Activated CD8-positive, alpha-beta memory T cell treated with anti-CD3 and anti-CD28 coated beads, Interleukin-2, amount 10 ng/mL, durations not matched to agents 7 days and 5 days (primary cell): ENCODE measurements at regions of chr1 and their contacts with region 1.

Region 1: DNA sequence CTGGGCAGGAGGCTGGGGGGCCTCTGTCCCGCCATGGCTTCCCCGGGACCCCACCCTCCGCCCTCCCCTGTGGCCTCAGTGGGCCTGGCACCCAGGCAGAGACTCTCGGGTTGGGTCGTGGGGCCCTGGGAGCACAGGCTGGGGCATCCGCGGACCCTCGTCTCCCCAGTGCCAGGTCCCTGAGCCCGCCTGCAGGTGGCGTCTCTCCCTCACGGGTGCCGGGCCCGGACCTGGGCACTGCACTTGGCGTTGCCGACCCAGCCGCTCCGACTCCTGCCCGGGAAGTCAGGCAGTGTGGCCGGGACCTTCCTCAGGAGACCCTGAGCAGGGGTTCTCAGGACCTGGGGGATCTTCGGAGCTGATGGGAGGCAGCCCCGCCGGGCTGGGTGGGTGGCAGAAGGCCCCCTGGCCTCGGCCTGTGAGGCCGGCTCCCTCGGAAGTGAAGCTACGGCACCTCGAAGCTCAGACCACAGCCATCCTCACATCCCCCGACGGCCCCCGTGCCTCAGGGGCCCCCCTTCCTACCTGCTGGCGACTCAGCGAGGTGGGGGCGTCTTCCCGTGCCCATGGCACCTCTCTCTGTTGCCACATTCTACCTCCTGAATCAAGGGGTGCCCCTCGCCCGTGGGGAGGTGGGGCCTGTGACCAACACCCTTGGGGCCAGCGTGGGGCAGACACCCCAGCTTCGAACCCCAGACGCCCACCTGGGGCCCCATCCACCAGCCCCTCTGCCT is 6.4 kb upstream of the C1orf159 start:
- DNase-seq: peak; percentile 87
- ATAC-seq: peak; percentile 96
- H3K4me3 Mint-ChIP-seq: no peak overlapping the region
- H3K27ac Mint-ChIP-seq: no peak overlapping the region
- H3K4me1 Mint-ChIP-seq: peaks cover 11% of the 10 kb centered on the region
- H3K27me3 Mint-ChIP-seq: peaks cover 18% of the 10 kb centered on the region

Region 2: GRCh38 chr1:1206376-1207260 is 84.4 kb after region 1 on chr1 and contains the start of gene TNFRSF18:
- CTCF ChIA-PET with region 1: interaction called, 24 read pairs
- DNase-seq: no peak
- ATAC-seq: peak; percentile 17
- H3K4me3 Mint-ChIP-seq: peak within 1 kb of the TSS; percentile 53
- H3K27ac Mint-ChIP-seq: peak within 1 kb of the TSS; percentile 64
- H3K4me1 Mint-ChIP-seq: peaks cover 22% of the 10 kb centered on the region
- H3K27me3 Mint-ChIP-seq: no peaks in the 10 kb centered on the region
- total RNA-seq, gene TNFRSF18: 28.1 to 156 TPM

Region 3: DNA sequence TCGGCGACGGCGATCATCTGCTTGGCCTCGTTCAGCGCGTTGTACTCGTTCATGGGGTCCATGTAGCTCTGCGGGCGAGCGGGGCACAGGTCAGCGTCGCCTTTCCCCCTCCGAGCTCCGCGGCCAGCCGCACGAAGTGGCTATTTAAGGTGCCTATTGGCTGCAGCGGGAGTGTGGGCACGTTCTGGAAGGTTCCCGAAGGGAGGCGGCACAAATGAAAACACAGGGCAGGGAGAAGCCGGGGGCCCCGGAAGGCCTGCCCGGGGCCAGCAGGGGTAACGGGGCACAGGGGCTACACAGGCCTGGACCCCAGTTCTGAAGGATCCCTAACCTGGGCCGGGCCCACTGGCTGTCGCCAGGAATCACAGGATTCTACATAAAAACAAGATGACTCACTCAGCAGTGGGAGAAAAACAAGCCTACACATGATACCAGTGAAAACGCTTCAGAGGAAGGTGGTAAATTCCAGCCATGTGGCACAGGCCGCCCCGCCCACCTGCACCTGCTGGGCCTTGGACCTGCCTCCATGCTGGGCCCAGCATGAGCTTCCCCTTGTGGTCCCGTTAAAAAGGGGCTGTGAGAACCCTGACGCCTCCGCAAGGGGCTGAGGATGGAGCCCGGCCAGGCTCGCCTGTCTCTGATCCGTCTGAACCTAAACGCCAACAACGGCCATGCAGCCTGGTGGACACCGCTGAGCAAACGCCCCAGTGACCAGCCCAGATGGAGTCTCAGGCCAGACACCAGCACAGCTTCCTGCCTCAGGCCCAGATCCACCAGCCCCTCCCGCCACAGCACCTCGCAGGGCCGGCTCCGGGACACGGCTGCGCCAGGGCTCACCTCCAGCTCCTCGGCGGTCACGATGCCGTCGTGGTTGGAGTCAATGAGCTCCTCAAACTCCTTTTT is 95.6 kb after region 1 on chr1:
- CTCF ChIA-PET with region 1: interaction called, 16 read pairs
- DNase-seq: no peak
- ATAC-seq: no peak
- H3K4me3 Mint-ChIP-seq: no peak overlapping the region
- H3K27ac Mint-ChIP-seq: no peak overlapping the region
- H3K4me1 Mint-ChIP-seq: peaks cover 36% of the 10 kb centered on the region
- H3K27me3 Mint-ChIP-seq: no peaks in the 10 kb centered on the region

Region 4: DNA sequence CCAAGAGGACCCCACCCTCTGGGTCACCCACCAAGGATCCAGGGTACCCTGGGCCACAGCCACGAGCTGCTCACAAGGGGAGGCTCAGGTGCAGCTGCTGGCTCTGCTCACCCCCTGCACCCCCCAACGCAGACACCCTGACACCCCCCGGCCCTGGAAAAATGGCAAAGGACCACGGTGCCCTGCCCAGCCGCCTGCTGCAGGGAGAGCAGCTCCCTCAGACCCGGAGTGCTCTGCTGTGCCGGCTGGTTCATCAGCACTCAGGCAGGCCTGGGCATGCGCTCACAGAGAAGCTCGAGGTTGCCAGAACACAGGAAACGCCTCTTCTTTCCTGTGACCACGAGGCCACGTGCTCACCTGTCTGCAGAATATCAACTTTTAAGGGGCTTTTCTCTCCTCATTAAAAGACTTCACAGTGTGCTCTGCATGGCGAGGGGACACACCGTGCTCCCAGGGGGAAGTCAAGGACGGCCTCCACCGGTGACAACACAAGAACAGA is 128.6 kb after region 1 on chr1:
- CTCF ChIA-PET with region 1: interaction called, 46 read pairs
- DNase-seq: peak; percentile 88
- ATAC-seq: peak; percentile 97
- H3K4me3 Mint-ChIP-seq: no peak overlapping the region
- H3K27ac Mint-ChIP-seq: peak overlapping the region; percentile 81
- H3K4me1 Mint-ChIP-seq: peaks cover 14% of the 10 kb centered on the region
- H3K27me3 Mint-ChIP-seq: peaks cover 3% of the 10 kb centered on the region

Region 5: DNA sequence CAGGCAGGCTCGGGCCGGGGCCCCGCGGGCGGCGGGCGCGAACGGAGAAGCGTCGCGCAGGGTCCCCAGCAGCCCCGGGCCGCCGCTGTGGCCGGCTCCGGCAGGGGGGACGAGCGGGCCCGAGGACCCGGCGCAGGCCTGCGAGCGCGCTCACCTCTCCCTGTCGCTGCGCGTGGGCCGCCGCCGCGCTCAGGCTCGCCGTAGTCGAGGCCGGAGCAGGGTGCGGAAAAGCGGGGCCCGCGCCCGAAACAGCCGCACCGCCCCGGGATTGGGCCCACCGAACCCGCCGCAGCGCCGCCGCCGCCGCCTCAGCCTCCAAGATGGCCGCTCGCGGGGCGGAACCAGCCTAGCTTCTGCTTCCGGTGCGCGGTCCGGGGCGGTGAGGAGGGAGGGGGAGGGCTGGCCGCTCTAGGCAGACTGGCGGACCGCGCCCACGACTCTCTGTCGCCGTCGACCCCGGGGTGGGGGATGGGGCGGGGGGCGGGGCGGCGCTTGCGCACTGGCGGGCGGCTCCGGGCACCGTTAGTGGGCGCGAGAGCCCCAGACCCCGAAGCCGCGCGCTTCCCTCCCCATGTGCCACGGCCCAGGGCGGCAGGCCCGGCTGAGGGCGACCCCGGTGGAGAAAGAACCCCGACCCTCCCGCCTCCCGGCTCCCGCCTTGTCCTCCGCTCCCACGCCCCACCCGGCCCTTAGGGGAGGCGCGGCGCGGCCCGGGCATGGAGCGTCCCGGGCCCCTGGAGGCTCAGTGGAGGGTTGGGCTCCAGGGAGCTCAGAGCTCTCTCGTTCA is 151.5 kb after region 1 on chr1 and contains the start of gene UBE2J2:
- CTCF ChIA-PET with region 1: interaction called, 12 read pairs
- DNase-seq: peak; percentile 96
- ATAC-seq: peak; percentile 95
- H3K4me3 Mint-ChIP-seq: peak within 1 kb of the TSS; percentile 90
- H3K27ac Mint-ChIP-seq: peak within 1 kb of the TSS; percentile 84
- H3K4me1 Mint-ChIP-seq: peaks cover 37% of the 10 kb centered on the region
- H3K27me3 Mint-ChIP-seq: no peaks in the 10 kb centered on the region
- total RNA-seq, gene UBE2J2: 71.3 to 83.3 TPM

Region 6: GRCh38 chr1:1305300-1306069 is 183.2 kb after region 1 on chr1:
- CTCF ChIA-PET with region 1: interaction called, 20 read pairs
- DNase-seq: peak; percentile 91
- ATAC-seq: peak; percentile 67
- H3K4me3 Mint-ChIP-seq: peak overlapping the region; percentile 85
- H3K27ac Mint-ChIP-seq: peak overlapping the region; percentile 92
- H3K4me1 Mint-ChIP-seq: peaks cover 24% of the 10 kb centered on the region
- H3K27me3 Mint-ChIP-seq: no peaks in the 10 kb centered on the region